Activated CD8-positive, alpha-beta T cell treated with anti-CD3 and anti-CD28 coated beads, Interleukin-2, amount 10 ng/mL, durations not matched to agents 7 days and 5 days (primary cell): ENCODE measurements at regions of chr6 and their contacts with region 1.

Region 1: GRCh38 chr6:151014404-151015100 is 149.1 kb downstream of the MTHFD1L start:
- DNase-seq: peak; percentile 73
- ATAC-seq: peak; percentile 70
- H3K4me3 Mint-ChIP-seq: no peak overlapping the region
- H3K27ac Mint-ChIP-seq: no peak overlapping the region
- H3K4me1 Mint-ChIP-seq: peaks cover 2% of the 10 kb centered on the region
- H3K27me3 Mint-ChIP-seq: no peaks in the 10 kb centered on the region

Region 2: GRCh38 chr6:150987371-150987828 is 27.2 kb before region 1 on chr6:
- CTCF ChIA-PET with region 1: interaction called, 13 read pairs
- POLR2A ChIA-PET with region 1: interaction called, 5 read pairs
- DNase-seq: peak; percentile 55
- ATAC-seq: peak; percentile 89
- H3K4me3 Mint-ChIP-seq: no peak overlapping the region
- H3K27ac Mint-ChIP-seq: peak overlapping the region; percentile 94
- H3K4me1 Mint-ChIP-seq: peaks cover 12% of the 10 kb centered on the region
- H3K27me3 Mint-ChIP-seq: no peaks in the 10 kb centered on the region

Region 3: DNA sequence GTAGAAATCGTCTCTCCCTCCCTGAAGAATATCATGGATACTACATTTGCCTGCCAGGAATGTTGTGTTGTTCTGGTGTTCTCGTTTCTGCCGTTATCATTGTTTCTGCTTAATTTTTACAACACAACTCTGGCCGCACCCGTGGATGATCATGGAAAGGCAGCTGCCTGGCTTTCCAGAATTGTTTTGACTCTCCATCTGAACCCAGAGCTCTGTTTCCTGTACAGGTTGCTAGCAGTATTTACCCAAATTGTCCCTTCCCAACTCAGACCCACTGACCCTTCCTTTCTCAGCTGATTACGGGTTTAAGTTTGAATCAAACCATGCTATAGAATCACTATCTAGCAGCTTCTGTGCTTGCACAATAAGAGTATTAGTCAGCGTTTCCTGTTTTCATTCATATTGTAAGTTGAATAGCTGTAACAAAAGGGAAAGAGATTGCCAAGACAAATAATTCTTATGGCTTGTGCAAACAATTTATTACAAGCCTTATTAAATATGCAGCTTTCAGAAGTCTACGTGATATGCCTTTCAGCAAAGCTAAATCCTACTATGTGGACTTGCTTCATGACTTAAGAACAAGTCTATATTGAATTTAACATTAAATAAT is 10.0 kb before region 1 on chr6:
- CTCF ChIA-PET with region 1: interaction called, 45 read pairs
- POLR2A ChIA-PET with region 1: no interaction called
- DNase-seq: no peak
- ATAC-seq: no peak
- H3K4me3 Mint-ChIP-seq: no peak overlapping the region
- H3K27ac Mint-ChIP-seq: peak overlapping the region; percentile 71
- H3K4me1 Mint-ChIP-seq: peaks cover 26% of the 10 kb centered on the region
- H3K27me3 Mint-ChIP-seq: no peaks in the 10 kb centered on the region

Region 4: GRCh38 chr6:151032034-151032433 is 17.5 kb after region 1 on chr6:
- CTCF ChIA-PET with region 1: interaction called, 25 read pairs
- POLR2A ChIA-PET with region 1: no interaction called
- DNase-seq: no peak
- ATAC-seq: no peak
- H3K4me3 Mint-ChIP-seq: no peak overlapping the region
- H3K27ac Mint-ChIP-seq: no peak overlapping the region
- H3K4me1 Mint-ChIP-seq: peaks cover 14% of the 10 kb centered on the region
- H3K27me3 Mint-ChIP-seq: no peaks in the 10 kb centered on the region

Region 5: DNA sequence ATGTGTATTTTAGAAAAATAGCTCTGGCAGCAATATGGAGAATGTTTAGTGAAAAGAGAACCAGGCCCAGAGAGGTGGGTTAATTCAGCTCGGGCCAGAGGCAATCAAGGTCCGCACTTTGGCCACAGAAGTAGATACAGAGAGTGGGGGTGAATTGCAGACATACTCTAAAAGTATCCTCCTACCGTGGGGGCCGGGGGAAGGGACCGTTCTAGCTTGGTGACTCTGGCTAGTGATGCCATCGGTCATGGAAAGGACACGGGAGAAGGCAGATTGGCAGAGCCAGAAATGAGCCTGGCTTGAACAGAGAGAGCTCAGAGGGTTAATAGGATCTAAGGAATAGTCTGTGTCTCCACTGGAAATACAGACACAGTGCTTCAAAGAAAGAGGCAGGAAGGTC is 24.1 kb after region 1 on chr6:
- CTCF ChIA-PET with region 1: interaction called, 11 read pairs
- POLR2A ChIA-PET with region 1: no interaction called
- DNase-seq: no peak
- ATAC-seq: no peak
- H3K4me3 Mint-ChIP-seq: no peak overlapping the region
- H3K27ac Mint-ChIP-seq: no peak overlapping the region
- H3K4me1 Mint-ChIP-seq: peaks cover 5% of the 10 kb centered on the region
- H3K27me3 Mint-ChIP-seq: no peaks in the 10 kb centered on the region

Region 6: GRCh38 chr6:151075005-151075404 is 60.5 kb after region 1 on chr6:
- CTCF ChIA-PET with region 1: no interaction called
- POLR2A ChIA-PET with region 1: no interaction called
- DNase-seq: no peak
- ATAC-seq: no peak
- H3K4me3 Mint-ChIP-seq: no peak overlapping the region
- H3K27ac Mint-ChIP-seq: no peak overlapping the region
- H3K4me1 Mint-ChIP-seq: no peaks in the 10 kb centered on the region
- H3K27me3 Mint-ChIP-seq: no peaks in the 10 kb centered on the region

Region 7: GRCh38 chr6:151112130-151112529 is 97.6 kb after region 1 on chr6:
- CTCF ChIA-PET with region 1: no interaction called
- POLR2A ChIA-PET with region 1: no interaction called
- DNase-seq: no peak
- ATAC-seq: no peak
- H3K4me3 Mint-ChIP-seq: no peak overlapping the region
- H3K27ac Mint-ChIP-seq: no peak overlapping the region
- H3K4me1 Mint-ChIP-seq: no peaks in the 10 kb centered on the region
- H3K27me3 Mint-ChIP-seq: peaks cover 10% of the 10 kb centered on the region

Region 8: DNA sequence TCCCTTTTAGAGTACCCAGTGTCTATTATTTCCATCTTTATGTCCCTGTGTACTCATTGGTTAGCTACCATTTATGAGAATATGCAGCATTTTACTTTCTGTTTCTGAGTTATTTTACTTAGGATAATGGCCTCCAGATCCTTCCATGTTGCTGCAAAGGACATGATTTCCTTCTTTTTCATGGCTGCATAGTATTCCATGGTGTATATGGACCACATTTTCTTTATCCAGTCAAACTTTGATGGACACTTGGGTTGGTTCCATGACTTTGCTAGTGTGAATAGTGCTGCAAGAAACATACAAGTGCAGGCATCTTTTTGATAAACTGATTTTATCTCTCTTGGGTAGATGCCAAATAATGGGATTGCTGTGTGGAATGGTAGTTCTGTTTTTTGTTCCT is 321.4 kb after region 1 on chr6:
- CTCF ChIA-PET with region 1: interaction called, 26 read pairs
- POLR2A ChIA-PET with region 1: no interaction called
- DNase-seq: no peak
- ATAC-seq: no peak
- H3K4me3 Mint-ChIP-seq: no peak overlapping the region
- H3K27ac Mint-ChIP-seq: no peak overlapping the region
- H3K4me1 Mint-ChIP-seq: no peaks in the 10 kb centered on the region
- H3K27me3 Mint-ChIP-seq: peaks cover 4% of the 10 kb centered on the region